CD4-positive, alpha-beta memory T cell (primary cell): ENCODE measurements at regions of chr11 and their contacts with region 1.

Region 1: DNA sequence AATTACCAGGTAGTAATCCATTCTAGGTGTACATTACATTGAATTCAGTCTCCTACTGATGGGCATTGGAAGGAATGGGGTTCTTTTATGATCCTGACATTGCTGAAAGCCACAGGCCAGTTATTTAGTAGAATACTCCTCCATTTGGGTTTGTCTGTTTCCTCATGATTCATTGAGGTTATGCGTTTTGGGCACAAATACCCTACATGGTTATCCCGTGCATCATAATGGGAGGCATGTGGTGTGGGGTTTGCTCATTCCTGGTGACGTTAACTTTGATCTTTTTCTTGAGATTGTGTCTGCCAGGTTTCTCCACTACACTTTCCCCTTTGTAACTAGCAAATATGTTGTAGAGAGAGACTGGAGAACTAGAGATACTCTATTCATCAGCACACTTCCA is 5.5 kb downstream of the FOLR3 start:
- DNase-seq: no peak
- H3K4me3 ChIP-seq: no peak overlapping the region
- H3K4me3 Mint-ChIP-seq: no peak overlapping the region
- H3K27ac ChIP-seq: no peak overlapping the region
- H3K27ac Mint-ChIP-seq: peak overlapping the region in 1 of 7 donors; percentile 13
- H3K4me1 ChIP-seq: no peaks in the 10 kb centered on the region
- H3K4me1 Mint-ChIP-seq: peaks cover 2 to 14% (median 6%) of the 10 kb centered on the region in 4 donors
- H3K27me3 ChIP-seq: no peaks in the 10 kb centered on the region
- H3K27me3 Mint-ChIP-seq: peaks cover 0 to 6% of the 10 kb centered on the region in 2 donors

Region 2: DNA sequence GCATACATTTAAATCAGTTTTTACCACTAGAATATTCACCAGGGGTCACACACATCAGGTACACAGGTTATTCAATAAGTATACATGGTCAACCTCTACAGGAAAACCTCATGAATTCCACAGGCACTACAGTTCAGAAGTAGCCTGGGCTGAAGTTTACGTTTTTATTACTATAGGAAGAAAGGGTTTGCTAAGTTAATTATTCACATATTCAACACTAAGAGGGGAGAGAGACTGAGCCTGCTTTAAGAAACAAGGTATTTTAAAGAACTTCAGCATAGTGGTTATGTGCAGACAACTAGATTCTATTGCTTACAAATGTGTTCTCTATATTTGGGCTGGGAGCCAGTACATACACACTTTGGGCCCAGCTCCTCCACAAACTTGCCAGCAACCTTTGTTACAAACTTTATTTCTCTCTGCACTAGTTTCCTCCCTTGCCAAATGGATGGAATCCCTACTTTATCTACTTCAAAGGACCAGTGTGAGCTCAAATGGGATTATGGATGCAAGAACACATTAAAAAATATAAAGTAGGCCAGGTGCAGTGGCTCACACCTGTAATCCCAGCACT is 110.5 kb before region 1 on chr11:
- CTCF ChIA-PET with region 1: interaction called, 188 read pairs
- POLR2A ChIA-PET with region 1: interaction called, 3 read pairs
- intact Hi-C with region 1: loop called (anchors 1 kb)
- DNase-seq: no peak
- H3K4me3 ChIP-seq: no peak overlapping the region
- H3K4me3 Mint-ChIP-seq: peak overlapping the region in 2 of 8 donors; percentile 2 to 16
- H3K27ac ChIP-seq: no peak overlapping the region
- H3K27ac Mint-ChIP-seq: peak overlapping the region; percentile 27 to 90 (median 73)
- H3K4me1 ChIP-seq: peaks cover 55% of the 10 kb centered on the region
- H3K4me1 Mint-ChIP-seq: peaks cover 27 to 56% (median 45%) of the 10 kb centered on the region in 4 donors
- H3K27me3 ChIP-seq: no peaks in the 10 kb centered on the region
- H3K27me3 Mint-ChIP-seq: no peaks in the 10 kb centered on the region

Region 3: GRCh38 chr11:72091005-72091691 is 49.9 kb before region 1 on chr11:
- CTCF ChIA-PET with region 1: interaction called, 10 read pairs
- POLR2A ChIA-PET with region 1: no interaction called
- intact Hi-C with region 1: no loop called
- DNase-seq: peak; percentile 57 to 80 (median 66)
- H3K4me3 ChIP-seq: no peak overlapping the region
- H3K4me3 Mint-ChIP-seq: no peak overlapping the region
- H3K27ac ChIP-seq: no peak overlapping the region
- H3K27ac Mint-ChIP-seq: peak overlapping the region; percentile 10 to 91 (median 81)
- H3K4me1 ChIP-seq: no peaks in the 10 kb centered on the region
- H3K4me1 Mint-ChIP-seq: peaks cover 4 to 11% (median 9%) of the 10 kb centered on the region in 4 donors
- H3K27me3 ChIP-seq: no peaks in the 10 kb centered on the region
- H3K27me3 Mint-ChIP-seq: no peaks in the 10 kb centered on the region

Region 4: GRCh38 chr11:72112321-72113219 is 28.5 kb before region 1 on chr11 and contains the start of gene ANAPC15:
- CTCF ChIA-PET with region 1: interaction called, 6 read pairs
- POLR2A ChIA-PET with region 1: interaction called, 7 read pairs
- intact Hi-C with region 1: loop called (anchors 2 kb)
- DNase-seq: peak; percentile 98 to 100 (median 99)
- H3K4me3 ChIP-seq: peak within 1 kb of the TSS; percentile 79 to 97
- H3K4me3 Mint-ChIP-seq: peak within 1 kb of the TSS; percentile 96 to 99 (median 97)
- H3K27ac ChIP-seq: peak within 1 kb of the TSS; percentile 97
- H3K27ac Mint-ChIP-seq: peak within 1 kb of the TSS; percentile 98 to 100 (median 99)
- H3K4me1 ChIP-seq: peaks cover 18% of the 10 kb centered on the region
- H3K4me1 Mint-ChIP-seq: peaks cover 15 to 34% (median 23%) of the 10 kb centered on the region in 4 donors
- H3K27me3 ChIP-seq: no peaks in the 10 kb centered on the region
- H3K27me3 Mint-ChIP-seq: peaks cover 2 to 3% of the 10 kb centered on the region in 2 donors
- total RNA-seq, gene ANAPC15: 38.6 to 40.2 TPM

Region 5: DNA sequence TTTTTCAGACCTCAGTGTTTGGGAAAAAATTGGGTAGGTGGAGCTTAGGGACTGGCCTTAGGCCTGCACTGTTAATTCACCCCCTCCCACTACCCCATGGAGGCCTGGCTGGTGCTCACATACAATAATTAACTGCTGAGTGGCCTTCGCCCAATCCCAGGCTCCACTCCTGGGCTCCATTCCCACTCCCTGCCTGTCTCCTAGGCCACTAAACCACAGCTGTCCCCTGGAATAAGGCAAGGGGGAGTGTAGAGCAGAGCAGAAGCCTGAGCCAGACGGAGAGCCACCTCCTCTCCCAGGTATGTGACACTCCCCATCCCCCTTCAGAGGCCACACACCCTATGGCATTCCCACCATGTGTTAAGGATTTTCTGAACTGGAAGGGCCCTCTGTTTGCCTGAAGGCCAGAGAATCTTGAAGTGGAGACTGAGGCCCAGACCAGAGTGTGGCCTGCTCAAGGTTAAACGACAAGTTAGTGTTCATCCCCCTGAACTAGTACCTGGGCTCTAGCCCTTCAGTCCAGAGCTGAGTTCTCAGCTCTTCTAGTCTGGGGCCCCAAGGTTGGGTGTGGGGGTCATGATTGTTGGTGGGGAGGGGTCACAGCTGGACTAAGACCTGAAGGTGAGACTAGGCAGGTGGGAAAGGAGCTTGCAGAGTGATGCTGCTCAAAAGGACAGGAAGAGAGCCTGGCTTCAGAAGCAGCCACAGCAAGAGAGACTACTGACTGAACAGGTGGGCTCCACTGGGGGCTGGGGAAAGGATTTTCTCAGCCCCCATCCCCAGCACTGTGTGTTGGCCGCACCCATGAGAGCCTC is 48.6 kb after region 1 on chr11:
- CTCF ChIA-PET with region 1: interaction called, 13 read pairs
- POLR2A ChIA-PET with region 1: no interaction called
- intact Hi-C with region 1: no loop called
- DNase-seq: no peak
- H3K4me3 ChIP-seq: no peak overlapping the region
- H3K4me3 Mint-ChIP-seq: no peak overlapping the region
- H3K27ac ChIP-seq: no peak overlapping the region
- H3K27ac Mint-ChIP-seq: no peak overlapping the region
- H3K4me1 ChIP-seq: no peaks in the 10 kb centered on the region
- H3K4me1 Mint-ChIP-seq: no peaks in the 10 kb centered on the region
- H3K27me3 ChIP-seq: no peaks in the 10 kb centered on the region
- H3K27me3 Mint-ChIP-seq: no peaks in the 10 kb centered on the region

Region 6: GRCh38 chr11:72203163-72203562 is 62.1 kb after region 1 on chr11:
- CTCF ChIA-PET with region 1: no interaction called
- POLR2A ChIA-PET with region 1: no interaction called
- intact Hi-C with region 1: no loop called
- DNase-seq: no peak
- H3K4me3 ChIP-seq: no peak overlapping the region
- H3K4me3 Mint-ChIP-seq: no peak overlapping the region
- H3K27ac ChIP-seq: no peak overlapping the region
- H3K27ac Mint-ChIP-seq: no peak overlapping the region
- H3K4me1 ChIP-seq: no peaks in the 10 kb centered on the region
- H3K4me1 Mint-ChIP-seq: peaks cover 2 to 5% (median 3%) of the 10 kb centered on the region in 4 donors
- H3K27me3 ChIP-seq: no peaks in the 10 kb centered on the region
- H3K27me3 Mint-ChIP-seq: peaks cover 0 to 2% of the 10 kb centered on the region in 2 donors